ENCODE measurements at regions of chrX and their contacts with region 1.

Region 1: DNA sequence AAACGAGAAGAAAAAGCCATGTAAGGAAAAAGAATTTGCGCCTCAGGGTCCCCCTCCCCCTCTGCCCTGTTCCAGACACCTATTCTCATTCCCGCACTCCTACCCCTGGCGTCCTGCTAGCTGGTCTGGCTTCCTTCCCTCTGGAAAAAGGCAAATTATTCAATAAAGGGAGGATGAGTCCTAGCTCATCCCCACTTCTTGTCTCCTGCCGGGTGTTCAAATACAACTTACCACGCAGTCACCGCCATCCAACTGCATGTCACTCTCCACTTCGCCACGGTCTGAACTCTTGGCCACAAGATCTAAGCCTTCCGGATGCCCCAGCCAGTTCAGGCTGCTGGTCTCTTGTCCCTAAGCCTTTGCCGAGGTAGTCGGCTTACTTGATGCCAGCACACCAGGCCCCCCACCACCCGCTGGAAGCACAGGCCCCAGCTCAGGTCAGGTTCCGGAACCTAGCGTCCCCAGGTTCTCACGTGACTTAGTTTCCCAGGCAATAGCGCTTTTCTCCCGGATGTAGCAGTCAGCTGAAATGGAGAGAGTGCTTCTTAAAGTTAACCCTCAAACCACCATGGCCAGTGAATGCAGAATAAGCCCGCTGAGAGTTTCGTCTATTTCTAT is 209.6 kb upstream of the SPIN4 start:
- DNase-seq: peak; percentile 50 to 71
- H3K4me3 ChIP-seq: peak overlapping the region; percentile 83
- H3K27ac ChIP-seq: peak overlapping the region; percentile 63
- H3K4me1 ChIP-seq: peaks cover 11% of the 10 kb centered on the region; the same call in 1 of the 2 replicates
- H3K27me3 ChIP-seq: no peaks in the 10 kb centered on the region
- CTCF ChIP-seq: no peak

Region 2: GRCh38 chrX:63525491-63525890 is 35.2 kb before region 1 on chrX:
- CTCF ChIA-PET with region 1: no interaction called
- POLR2A ChIA-PET with region 1: no interaction called
- intact Hi-C with region 1: no loop called
- DNase-seq: no peak
- H3K4me3 ChIP-seq: no peak overlapping the region
- H3K27ac ChIP-seq: no peak overlapping the region
- H3K4me1 ChIP-seq: no peaks in the 10 kb centered on the region
- H3K27me3 ChIP-seq: no peaks in the 10 kb centered on the region
- CTCF ChIP-seq: no peak

Region 3: GRCh38 chrX:63754860-63755582 is 194.3 kb after region 1 on chrX:
- CTCF ChIA-PET with region 1: no interaction called
- POLR2A ChIA-PET with region 1: interaction called, 4 read pairs
- intact Hi-C with region 1: loop called (anchors 10 kb)
- DNase-seq: peak; percentile 85 to 90
- H3K4me3 ChIP-seq: peak overlapping the region; percentile 65
- H3K27ac ChIP-seq: peak overlapping the region; percentile 49; the same call in 1 of the 2 replicates
- H3K4me1 ChIP-seq: no peaks in the 10 kb centered on the region; the same call in 1 of the 2 replicates
- H3K27me3 ChIP-seq: no peaks in the 10 kb centered on the region
- CTCF ChIP-seq: no peak

Measured in PC-9 (cell line).